MCF 10A (cell line): ENCODE measurements at regions of chr14 and their contacts with region 1.

Region 1: GRCh38 chr14:75560962-75561432 is 17.4 kb upstream of the FLVCR2 start:
- DNase-seq: peak; percentile 93
- H3K4me3 Mint-ChIP-seq: no peak overlapping the region
- H3K27ac Mint-ChIP-seq: no peak overlapping the region
- H3K4me1 Mint-ChIP-seq: peaks cover 26% of the 10 kb centered on the region
- H3K27me3 Mint-ChIP-seq: no peaks in the 10 kb centered on the region
- CTCF ChIP-seq: peak; percentile 78

Region 2: DNA sequence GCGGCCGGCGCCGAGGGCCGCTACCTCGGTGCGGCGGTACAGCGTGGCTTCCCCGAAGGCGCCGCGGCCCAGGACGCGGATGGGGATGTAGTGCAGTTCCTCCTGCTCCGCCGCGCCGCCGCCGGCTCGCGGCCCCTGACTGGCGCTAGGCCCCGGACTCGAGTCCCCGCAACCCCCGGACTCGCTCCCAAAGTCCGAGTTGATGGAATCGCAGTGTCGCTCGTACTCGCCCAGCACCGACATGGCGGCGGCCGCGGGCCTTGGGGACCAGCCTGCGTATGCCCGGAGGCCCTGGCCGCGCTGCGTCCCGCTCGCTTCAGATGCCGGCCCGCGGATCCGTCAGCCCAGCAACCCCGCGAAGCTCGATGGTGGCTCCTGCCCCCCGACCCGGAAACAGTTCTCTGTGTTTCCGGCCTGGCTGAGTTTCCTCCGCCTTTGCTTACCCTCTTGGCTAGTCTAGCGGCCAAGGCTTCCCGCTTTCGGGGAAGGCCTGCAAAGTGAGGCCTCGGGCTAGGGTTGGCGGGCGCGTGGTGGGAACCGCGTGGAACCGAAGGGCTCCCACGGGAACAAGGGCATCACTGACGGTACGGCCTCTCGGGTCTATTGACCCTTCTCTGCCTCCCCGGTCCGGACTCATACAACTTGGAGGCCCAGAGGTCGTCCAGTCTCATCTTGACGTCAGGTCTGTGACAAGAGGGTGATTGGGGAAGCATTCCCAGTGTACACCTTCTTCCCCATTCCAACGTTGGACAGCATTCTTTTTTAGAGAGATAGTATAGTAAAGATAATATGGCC is 434.1 kb before region 1 on chr14 and contains the start of gene NEK9:
- CTCF ChIA-PET with region 1: interaction called, 17 read pairs
- POLR2A ChIA-PET with region 1: interaction called, 6 read pairs
- intact Hi-C with region 1: loop called (anchors 2 kb)
- DNase-seq: peak; percentile 88
- H3K4me3 Mint-ChIP-seq: peak within 1 kb of the TSS; percentile 72
- H3K27ac Mint-ChIP-seq: peak within 1 kb of the TSS; percentile 99
- H3K4me1 Mint-ChIP-seq: peaks cover 33% of the 10 kb centered on the region
- H3K27me3 Mint-ChIP-seq: no peaks in the 10 kb centered on the region
- CTCF ChIP-seq: no peak
- total RNA-seq, gene NEK9: 112 and 113 TPM in 2 replicates

Region 3: GRCh38 chr14:75307700-75308379 is 253.2 kb before region 1 on chr14:
- CTCF ChIA-PET with region 1: interaction called, 95 read pairs
- POLR2A ChIA-PET with region 1: interaction called, 12 read pairs
- intact Hi-C with region 1: loop called (anchors 1 kb)
- DNase-seq: peak; percentile 90
- H3K4me3 Mint-ChIP-seq: no peak overlapping the region
- H3K27ac Mint-ChIP-seq: peak overlapping the region; percentile 5
- H3K4me1 Mint-ChIP-seq: peaks cover 32% of the 10 kb centered on the region
- H3K27me3 Mint-ChIP-seq: no peaks in the 10 kb centered on the region
- CTCF ChIP-seq: peak; percentile 85

Region 4: DNA sequence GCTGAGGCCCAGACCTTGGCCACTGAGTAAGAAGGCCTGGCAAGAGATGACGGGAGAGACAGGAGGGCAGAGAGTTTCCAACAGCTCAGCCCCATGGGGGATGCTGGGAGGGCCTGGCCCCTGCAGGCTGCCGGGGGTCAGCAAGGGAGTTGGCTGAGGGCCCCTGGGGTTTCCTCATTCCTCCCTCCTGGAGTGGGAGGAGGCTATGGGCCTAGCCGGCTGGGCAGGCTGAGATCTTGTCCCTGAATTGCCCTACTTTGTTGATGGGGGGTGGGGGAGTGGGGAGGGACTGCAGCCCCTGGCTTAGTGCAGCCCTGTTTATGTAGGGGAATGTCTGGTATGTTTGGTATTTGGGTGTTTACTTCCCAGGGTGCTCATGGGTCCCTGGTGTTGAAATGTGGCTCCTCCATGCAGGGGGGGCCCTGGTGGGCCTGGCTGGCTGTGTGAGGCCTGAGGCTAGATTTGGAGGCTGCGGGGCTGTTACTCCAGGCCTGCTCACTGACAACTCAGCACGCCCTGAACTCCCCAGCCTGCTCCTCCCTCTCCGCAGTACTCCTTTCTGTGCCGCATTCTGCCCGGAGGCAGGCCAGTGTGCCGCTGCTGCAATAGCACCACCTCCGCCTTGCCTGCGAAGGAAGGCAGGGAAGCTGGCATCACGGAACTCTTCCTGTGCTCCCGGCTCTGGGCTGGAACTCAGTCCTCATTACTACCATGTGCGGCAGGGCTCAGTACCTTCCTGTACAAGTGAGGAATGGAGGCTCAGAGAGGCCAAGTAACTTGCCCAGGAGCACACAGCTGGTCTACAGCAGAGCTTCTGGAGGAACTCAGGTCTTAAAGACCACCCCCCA is 107.9 kb before region 1 on chr14:
- CTCF ChIA-PET with region 1: interaction called, 9 read pairs
- POLR2A ChIA-PET with region 1: interaction called, 5 read pairs
- intact Hi-C with region 1: loop called (anchors 1 kb)
- DNase-seq: peak; percentile 91
- H3K4me3 Mint-ChIP-seq: peak overlapping the region; percentile 11
- H3K27ac Mint-ChIP-seq: peak overlapping the region; percentile 69
- H3K4me1 Mint-ChIP-seq: peaks cover 67% of the 10 kb centered on the region
- H3K27me3 Mint-ChIP-seq: no peaks in the 10 kb centered on the region
- CTCF ChIP-seq: no peak

Region 5: DNA sequence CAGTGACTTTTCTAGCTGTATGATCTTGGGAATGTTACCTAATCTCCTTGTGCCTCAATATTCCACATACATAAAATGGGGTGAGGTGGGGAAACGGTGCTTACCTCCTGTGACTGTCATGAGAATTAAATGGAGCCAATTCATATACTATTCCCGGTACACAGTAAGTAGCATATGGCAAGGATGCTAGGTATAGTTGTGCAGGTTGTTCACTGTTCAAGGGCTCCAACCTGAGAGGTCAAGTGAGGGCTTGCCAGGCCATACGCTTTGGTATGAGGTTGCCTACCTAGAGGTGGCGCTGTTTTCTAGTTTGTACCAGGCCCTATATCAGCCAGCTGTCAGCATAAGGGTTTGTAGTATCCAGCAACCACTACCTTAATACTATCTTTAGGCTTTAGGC is 42.4 kb before region 1 on chr14:
- CTCF ChIA-PET with region 1: interaction called, 23 read pairs
- POLR2A ChIA-PET with region 1: interaction called, 3 read pairs
- intact Hi-C with region 1: loop called (anchors 1 kb)
- DNase-seq: peak; percentile 58
- H3K4me3 Mint-ChIP-seq: no peak overlapping the region
- H3K27ac Mint-ChIP-seq: no peak overlapping the region
- H3K4me1 Mint-ChIP-seq: peaks cover 2% of the 10 kb centered on the region
- H3K27me3 Mint-ChIP-seq: no peaks in the 10 kb centered on the region
- CTCF ChIP-seq: peak; percentile 24

Region 6: DNA sequence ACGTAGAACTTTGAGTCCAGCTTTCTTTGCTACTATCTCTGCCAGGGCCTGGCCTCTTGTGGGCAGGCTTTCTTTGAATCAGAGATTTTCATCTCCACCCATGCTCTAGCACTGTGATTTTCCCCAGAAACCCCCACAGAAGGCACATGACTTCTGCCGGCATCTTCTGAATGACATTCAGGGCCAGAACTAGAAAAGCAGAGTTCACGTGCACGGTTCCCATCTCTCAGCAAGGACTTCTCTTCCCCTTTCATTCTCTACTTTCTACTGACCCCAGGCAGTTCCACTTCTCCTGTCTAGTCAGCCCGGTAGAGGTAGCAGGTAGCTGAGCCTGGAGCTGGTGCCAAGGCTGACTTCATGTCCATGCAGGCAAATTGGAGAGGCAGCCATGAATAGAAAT is 11.8 kb before region 1 on chr14:
- CTCF ChIA-PET with region 1: interaction called, 12 read pairs
- POLR2A ChIA-PET with region 1: no interaction called
- intact Hi-C with region 1: no loop called
- DNase-seq: no peak
- H3K4me3 Mint-ChIP-seq: no peak overlapping the region
- H3K27ac Mint-ChIP-seq: no peak overlapping the region
- H3K4me1 Mint-ChIP-seq: peaks cover 24% of the 10 kb centered on the region
- H3K27me3 Mint-ChIP-seq: no peaks in the 10 kb centered on the region
- CTCF ChIP-seq: no peak

Region 7: GRCh38 chr14:75825147-75825592 is 264.2 kb after region 1 on chr14:
- CTCF ChIA-PET with region 1: no interaction called
- POLR2A ChIA-PET with region 1: no interaction called
- intact Hi-C with region 1: no loop called
- DNase-seq: no peak
- H3K4me3 Mint-ChIP-seq: no peak overlapping the region
- H3K27ac Mint-ChIP-seq: no peak overlapping the region
- H3K4me1 Mint-ChIP-seq: peaks cover 23% of the 10 kb centered on the region
- H3K27me3 Mint-ChIP-seq: no peaks in the 10 kb centered on the region
- CTCF ChIP-seq: no peak